ENCODE measurements at regions of chr13 and their contacts with region 1.

Region 1: DNA sequence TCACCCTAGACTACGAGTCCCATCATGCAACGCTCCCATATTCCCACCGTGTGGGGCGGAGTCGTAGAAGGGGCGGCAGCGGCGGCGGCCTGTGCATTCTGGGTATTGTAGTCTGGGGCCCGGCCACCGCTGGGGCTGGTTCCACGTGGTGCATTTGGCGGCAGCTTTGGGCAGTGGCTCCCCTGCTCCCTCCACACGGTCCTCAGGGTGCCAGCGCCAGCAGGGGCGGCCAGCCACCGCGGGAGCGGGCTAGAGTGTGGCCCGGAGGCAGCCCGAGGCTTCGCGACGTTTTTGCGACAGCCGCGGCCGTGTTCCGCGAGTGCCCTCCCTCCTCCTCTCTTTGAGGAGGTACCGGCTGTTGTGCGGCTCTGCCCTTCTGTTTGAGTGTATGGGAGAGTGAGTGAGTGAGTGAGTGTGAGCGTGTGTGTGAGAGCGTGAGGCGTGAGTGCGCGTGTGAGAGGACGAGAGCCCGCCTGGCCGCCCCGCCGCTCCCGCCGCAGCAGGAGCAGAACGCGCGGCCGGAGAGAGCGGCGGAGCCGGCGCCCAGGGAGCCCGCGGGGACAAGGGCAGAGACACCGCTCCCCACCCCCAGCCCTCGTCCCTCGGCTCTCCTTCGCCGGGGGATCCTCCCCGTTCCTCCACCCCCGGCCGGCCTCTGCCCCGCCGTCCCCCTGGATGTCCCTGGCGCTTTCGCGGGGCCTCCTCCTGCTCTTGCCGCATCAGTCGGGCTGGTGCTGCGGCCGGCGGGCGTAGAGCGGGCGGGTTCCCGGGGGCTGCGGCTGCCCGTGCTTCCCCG is at the start of gene CDK8:
- DNase-seq: peak; percentile 72 to 83 (median 77)
- H3K4me3 ChIP-seq: peak within 1 kb of the TSS; percentile 59 to 98 (median 66)
- H3K4me3 Mint-ChIP-seq: peak within 1 kb of the TSS; percentile 84 to 98
- H3K27ac ChIP-seq: peak within 1 kb of the TSS; percentile 65 to 79
- H3K27ac Mint-ChIP-seq: peak within 1 kb of the TSS; percentile 50 to 88 (median 82)
- H3K4me1 ChIP-seq: peaks cover 15 to 18% of the 10 kb centered on the region in 2 donors
- H3K4me1 Mint-ChIP-seq: peaks cover 25% of the 10 kb centered on the region
- H3K27me3 ChIP-seq: no peaks in the 10 kb centered on the region
- H3K27me3 Mint-ChIP-seq: peaks cover 0 to 7% (median 0%) of the 10 kb centered on the region in 3 donors
- CTCF ChIP-seq: no peak
- polyA plus RNA-seq, gene CDK8: 3.0 to 10.9 (median 3.3) TPM

Region 2: DNA sequence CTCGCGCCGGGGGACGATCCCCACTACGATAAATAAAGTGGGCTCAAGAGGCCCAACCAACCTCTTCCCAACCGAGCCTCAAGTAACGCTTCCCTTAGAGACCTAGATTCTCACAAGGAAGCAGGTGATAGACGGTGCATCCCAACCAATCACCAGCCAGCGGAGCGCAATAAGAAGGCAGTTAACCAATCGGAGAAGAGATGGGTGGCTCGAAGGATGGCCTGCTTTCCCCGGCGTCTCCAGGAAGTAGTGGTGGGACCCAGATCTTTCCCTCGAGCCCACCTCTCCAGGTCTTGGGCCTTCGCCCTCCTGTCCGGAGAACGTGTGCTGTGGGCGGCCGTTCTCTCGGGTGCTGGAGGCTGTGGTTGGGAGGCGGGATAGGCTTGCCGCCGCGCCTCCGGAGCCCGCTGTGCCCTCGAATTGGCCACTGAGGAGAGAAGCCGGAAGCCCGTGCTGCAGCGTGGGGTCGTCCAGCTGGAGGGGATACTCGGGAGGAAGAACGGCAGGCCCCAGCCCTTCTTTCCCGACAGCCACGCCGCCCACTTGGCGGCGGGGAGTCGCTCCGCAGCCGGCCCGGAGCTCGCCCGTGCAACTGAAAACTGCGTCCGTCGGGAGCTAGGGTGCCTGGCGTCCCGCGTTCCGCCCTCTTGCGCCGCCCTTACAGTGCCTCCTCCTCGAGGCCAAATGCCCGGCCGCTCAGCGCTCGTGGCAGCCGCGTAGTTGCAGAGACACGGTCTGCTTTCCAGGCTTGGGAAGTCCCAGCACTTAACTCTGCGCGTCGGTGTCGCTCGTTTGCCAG is 32.1 kb before region 1 on chr13 and contains the start of gene RNF6:
- intact Hi-C with region 1: loop called in 1 of 2 experiments (anchors 2 kb)
- DNase-seq: peak; percentile 93 to 98 (median 94)
- H3K4me3 ChIP-seq: peak within 1 kb of the TSS; percentile 84 to 99 (median 95)
- H3K4me3 Mint-ChIP-seq: peak within 1 kb of the TSS; percentile 98 to 100
- H3K27ac ChIP-seq: peak within 1 kb of the TSS; percentile 85 to 98
- H3K27ac Mint-ChIP-seq: peak within 1 kb of the TSS; percentile 94 to 99 (median 98)
- H3K4me1 ChIP-seq: peaks cover 19 to 30% of the 10 kb centered on the region in 2 donors
- H3K4me1 Mint-ChIP-seq: peaks cover 27% of the 10 kb centered on the region
- H3K27me3 ChIP-seq: no peaks in the 10 kb centered on the region
- H3K27me3 Mint-ChIP-seq: peaks cover 2 to 4% (median 3%) of the 10 kb centered on the region in 3 donors
- CTCF ChIP-seq: no peak
- polyA plus RNA-seq, gene RNF6: 8.9 to 20.3 (median 15.0) TPM

Region 3: DNA sequence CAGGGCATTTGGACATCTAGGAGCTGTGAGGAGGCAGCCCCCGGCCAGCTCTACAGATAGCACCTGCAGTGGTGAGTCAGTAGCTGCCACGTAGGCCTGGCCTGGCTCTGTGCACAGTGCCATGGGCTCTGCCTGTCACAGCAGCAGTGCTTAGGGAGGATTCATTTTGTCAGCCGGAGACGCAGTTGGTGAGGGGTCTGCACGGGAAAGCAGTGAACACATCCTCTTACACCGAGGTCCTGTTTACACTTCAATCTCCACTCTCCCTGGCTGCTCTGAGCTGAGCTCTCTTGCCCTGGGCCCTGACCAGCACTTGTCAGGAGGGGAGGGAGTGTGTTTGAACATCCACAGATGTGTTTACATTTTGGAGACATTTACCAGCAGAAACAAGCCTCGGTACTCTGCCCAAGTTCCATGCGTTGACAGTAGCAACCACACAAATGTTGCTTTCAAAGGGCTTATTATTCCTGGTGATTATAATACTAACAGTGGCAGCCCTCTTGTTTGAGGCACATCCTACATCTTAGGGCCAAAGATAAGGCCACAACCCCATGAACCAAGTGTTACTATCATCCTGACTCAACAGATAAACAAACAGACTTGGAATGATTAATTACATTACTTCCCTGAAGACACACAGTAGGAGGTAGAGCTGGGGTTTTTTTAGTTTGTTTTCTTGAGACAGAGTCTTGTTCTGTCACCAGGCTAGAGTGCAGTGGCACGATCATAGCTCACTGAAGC is 768.8 kb after region 1 on chr13:
- intact Hi-C with region 1: no loop called
- DNase-seq: no peak
- H3K4me3 ChIP-seq: no peak overlapping the region
- H3K4me3 Mint-ChIP-seq: no peak overlapping the region
- H3K27ac ChIP-seq: no peak overlapping the region
- H3K27ac Mint-ChIP-seq: no peak overlapping the region
- H3K4me1 ChIP-seq: no peaks in the 10 kb centered on the region
- H3K4me1 Mint-ChIP-seq: peaks cover 3% of the 10 kb centered on the region
- H3K27me3 ChIP-seq: no peaks in the 10 kb centered on the region
- H3K27me3 Mint-ChIP-seq: peaks cover 0 to 6% (median 2%) of the 10 kb centered on the region in 3 donors
- CTCF ChIP-seq: no peak

Measured in CD14-positive monocyte (primary cell).